ENCODE measurements at regions of chr1 and their contacts with region 1.

Region 1: GRCh38 chr1:177334903-177335302 is 164.1 kb downstream of the BRINP2 start:
- DNase-seq: no peak
- ATAC-seq: no peak
- H3K4me3 ChIP-seq: no peak overlapping the region
- H3K4me3 Mint-ChIP-seq: no peak overlapping the region
- H3K27ac ChIP-seq: no peak overlapping the region
- H3K27ac Mint-ChIP-seq: no peak overlapping the region
- H3K4me1 ChIP-seq: no peaks in the 10 kb centered on the region
- H3K4me1 Mint-ChIP-seq: no peaks in the 10 kb centered on the region
- H3K27me3 ChIP-seq: no peaks in the 10 kb centered on the region
- H3K27me3 Mint-ChIP-seq: no peaks in the 10 kb centered on the region
- CTCF ChIP-seq: no peak

Region 2: DNA sequence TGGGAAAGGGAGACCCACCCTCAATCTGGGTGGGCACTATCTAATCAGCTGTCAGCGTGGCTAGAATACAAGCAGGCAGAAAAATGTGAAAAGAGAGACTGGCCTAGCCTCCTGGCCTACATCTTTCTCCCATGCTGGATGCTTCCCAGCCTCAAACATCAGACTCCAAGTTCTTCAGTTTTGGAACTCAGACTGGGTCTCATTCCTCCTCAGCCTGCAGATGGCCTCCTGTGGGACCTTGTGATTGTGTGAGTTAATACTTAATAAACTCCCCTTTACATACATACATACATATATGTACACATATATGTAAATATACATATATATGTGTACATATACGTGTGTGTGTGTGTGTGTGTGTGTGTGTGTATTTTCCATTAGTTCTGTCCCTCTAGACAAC is 43.0 kb after region 1 on chr1:
- CTCF ChIA-PET with region 1: no interaction called
- POLR2A ChIA-PET with region 1: no interaction called
- intact Hi-C with region 1: no loop called
- DNase-seq: no peak
- ATAC-seq: no peak
- H3K4me3 ChIP-seq: no peak overlapping the region
- H3K4me3 Mint-ChIP-seq: no peak overlapping the region
- H3K27ac ChIP-seq: no peak overlapping the region
- H3K27ac Mint-ChIP-seq: no peak overlapping the region
- H3K4me1 ChIP-seq: no peaks in the 10 kb centered on the region
- H3K4me1 Mint-ChIP-seq: no peaks in the 10 kb centered on the region
- H3K27me3 ChIP-seq: no peaks in the 10 kb centered on the region
- H3K27me3 Mint-ChIP-seq: no peaks in the 10 kb centered on the region
- CTCF ChIP-seq: no peak

Region 3: DNA sequence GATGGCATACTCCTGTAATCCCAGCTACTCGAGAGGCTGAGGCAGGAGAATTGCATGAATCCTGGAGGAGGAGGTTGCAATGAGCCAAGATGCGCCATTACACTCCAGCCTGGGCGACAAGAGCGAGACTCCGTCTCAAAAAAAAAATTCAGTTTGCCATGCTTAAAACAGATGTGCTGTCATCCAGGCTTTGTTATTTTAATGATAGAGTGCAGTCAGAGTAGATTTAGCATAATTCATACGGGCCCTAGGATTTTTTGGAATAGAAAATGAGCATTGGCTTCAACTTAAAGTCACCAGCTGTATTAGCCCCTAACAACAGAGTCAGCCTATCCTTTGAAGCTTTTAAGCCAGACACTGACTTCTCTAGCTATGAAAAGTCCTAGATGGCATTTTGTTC is 883.6 kb after region 1 on chr1:
- CTCF ChIA-PET with region 1: no interaction called
- POLR2A ChIA-PET with region 1: no interaction called
- intact Hi-C with region 1: loop called in 1 of 2 experiments (anchors 5 kb)
- DNase-seq: no peak
- ATAC-seq: no peak
- H3K4me3 ChIP-seq: no peak overlapping the region
- H3K4me3 Mint-ChIP-seq: no peak overlapping the region
- H3K27ac ChIP-seq: no peak overlapping the region
- H3K27ac Mint-ChIP-seq: no peak overlapping the region
- H3K4me1 ChIP-seq: no peaks in the 10 kb centered on the region
- H3K4me1 Mint-ChIP-seq: no peaks in the 10 kb centered on the region
- H3K27me3 ChIP-seq: no peaks in the 10 kb centered on the region
- H3K27me3 Mint-ChIP-seq: no peaks in the 10 kb centered on the region
- CTCF ChIP-seq: no peak